A673 (cell line): ENCODE measurements at regions of chrX and their contacts with region 1.

Region 1: DNA sequence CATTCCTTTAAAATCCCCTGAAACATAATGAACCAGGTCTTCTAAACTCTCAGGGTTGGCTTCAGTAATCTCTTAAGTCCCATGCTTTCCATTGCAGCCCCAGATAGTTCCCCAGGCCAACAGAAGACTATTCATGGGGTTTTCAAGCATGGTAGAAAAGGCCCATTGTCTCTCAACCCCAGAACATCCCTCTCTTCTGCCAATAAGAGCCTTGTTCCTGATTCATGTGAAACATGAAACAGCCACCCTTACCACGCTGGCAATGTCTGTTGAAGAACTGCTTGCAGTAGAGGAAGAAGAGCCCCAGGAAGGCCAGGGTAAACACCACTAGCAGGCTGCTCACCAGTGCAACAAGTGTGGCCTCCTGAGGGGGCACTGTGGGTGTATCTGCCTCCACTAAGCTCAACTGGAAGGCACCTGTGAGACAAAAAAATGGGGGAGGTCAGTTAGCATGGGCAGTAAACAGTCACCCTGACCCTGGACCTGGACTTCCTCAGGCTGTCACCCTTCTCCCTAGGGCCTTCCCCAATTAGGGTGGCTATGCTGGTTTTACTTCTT is 36.4 kb downstream of the EDA2R start:
- DNase-seq: no peak
- H3K4me3 ChIP-seq: no peak overlapping the region
- H3K27ac ChIP-seq: no peak overlapping the region
- H3K4me1 ChIP-seq: no peaks in the 10 kb centered on the region
- H3K27me3 ChIP-seq: no peaks in the 10 kb centered on the region
- CTCF ChIP-seq: no peak

Region 2: DNA sequence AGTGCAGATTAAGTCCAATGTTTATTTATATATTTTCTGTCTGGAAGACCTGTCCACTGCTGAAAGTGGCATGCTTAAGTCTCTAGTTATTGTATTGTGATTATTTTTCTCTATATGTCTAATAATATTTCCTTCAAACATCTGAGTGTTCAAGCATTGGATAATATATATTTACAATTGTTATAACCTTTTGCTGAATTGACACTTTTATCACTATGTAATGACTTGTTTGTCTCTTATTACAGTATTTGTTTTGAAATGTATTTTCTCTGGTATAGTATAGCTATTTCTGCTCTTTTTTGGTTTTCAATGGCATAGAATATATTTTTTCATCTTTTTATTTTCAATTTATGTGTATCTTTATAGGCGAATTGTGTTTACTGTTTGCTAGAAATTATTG is 23.2 kb before region 1 on chrX:
- CTCF ChIA-PET with region 1: no interaction called
- POLR2A ChIA-PET with region 1: no interaction called
- intact Hi-C with region 1: no loop called
- DNase-seq: no peak
- H3K4me3 ChIP-seq: no peak overlapping the region
- H3K27ac ChIP-seq: no peak overlapping the region
- H3K4me1 ChIP-seq: no peaks in the 10 kb centered on the region
- H3K27me3 ChIP-seq: no peaks in the 10 kb centered on the region
- CTCF ChIP-seq: no peak

Region 3: GRCh38 chrX:66654411-66654810 is 52.0 kb after region 1 on chrX:
- CTCF ChIA-PET with region 1: no interaction called
- POLR2A ChIA-PET with region 1: no interaction called
- intact Hi-C with region 1: loop called (anchors 10 kb)
- DNase-seq: no peak
- H3K4me3 ChIP-seq: no peak overlapping the region
- H3K27ac ChIP-seq: no peak overlapping the region
- H3K4me1 ChIP-seq: no peaks in the 10 kb centered on the region
- H3K27me3 ChIP-seq: no peaks in the 10 kb centered on the region
- CTCF ChIP-seq: no peak